ENCODE measurements at regions of chr17 and their contacts with region 1.

Region 1: DNA sequence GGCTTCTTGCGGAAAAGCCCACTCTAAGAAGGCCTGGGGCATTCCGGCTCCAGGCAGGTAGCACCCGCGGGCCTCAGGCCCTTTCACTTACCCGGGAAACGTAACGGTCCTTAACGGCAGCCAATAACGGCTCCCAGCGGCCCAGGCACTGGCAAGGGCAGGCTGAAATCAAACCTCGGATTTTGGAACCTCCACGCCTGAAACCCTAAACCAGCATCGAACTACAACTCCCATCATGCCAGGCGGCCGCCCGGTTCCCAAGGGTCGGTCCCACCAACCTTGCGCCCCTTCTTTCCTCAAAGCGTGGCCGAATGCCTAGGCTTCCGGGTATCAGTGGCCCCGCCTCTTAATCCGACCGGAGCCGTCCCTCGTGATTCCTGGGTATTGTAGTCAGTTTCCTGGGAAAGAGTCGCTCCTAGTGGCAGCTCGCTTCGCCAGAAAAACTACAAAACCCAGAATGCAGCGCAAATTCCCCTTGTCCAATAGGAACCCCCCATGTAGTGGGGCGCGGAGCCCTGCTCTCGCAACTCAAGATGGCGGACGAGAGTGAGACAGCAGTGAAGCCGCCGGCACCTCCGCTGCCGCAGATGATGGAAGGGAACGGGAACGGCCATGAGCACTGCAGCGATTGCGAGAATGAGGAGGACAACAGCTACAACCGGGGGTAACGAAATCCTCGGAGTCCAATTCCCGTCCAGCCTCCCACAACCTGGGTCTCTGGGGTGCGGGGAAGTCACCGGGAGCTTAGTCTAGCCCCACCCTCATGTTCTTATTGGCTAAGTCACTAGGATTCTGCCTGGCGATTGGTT is at the start of gene NMT1:
- DNase-seq: peak; percentile 100
- ATAC-seq: peak; percentile 87
- H3K4me3 ChIP-seq: peak within 1 kb of the TSS; percentile 62 to 98 (median 96)
- H3K4me3 Mint-ChIP-seq: peak within 1 kb of the TSS; percentile 99
- H3K27ac ChIP-seq: peak within 1 kb of the TSS; percentile 75 to 89
- H3K27ac Mint-ChIP-seq: peak within 1 kb of the TSS; percentile 100
- H3K4me1 ChIP-seq: peaks cover 29 to 42% of the 10 kb centered on the region in 2 donors
- H3K4me1 Mint-ChIP-seq: peaks cover 40% of the 10 kb centered on the region
- H3K27me3 ChIP-seq: no peaks in the 10 kb centered on the region
- H3K27me3 Mint-ChIP-seq: no peaks in the 10 kb centered on the region
- CTCF ChIP-seq: no peak
- total RNA-seq, gene NMT1: 123 and 134 TPM in 2 replicates

Region 2: DNA sequence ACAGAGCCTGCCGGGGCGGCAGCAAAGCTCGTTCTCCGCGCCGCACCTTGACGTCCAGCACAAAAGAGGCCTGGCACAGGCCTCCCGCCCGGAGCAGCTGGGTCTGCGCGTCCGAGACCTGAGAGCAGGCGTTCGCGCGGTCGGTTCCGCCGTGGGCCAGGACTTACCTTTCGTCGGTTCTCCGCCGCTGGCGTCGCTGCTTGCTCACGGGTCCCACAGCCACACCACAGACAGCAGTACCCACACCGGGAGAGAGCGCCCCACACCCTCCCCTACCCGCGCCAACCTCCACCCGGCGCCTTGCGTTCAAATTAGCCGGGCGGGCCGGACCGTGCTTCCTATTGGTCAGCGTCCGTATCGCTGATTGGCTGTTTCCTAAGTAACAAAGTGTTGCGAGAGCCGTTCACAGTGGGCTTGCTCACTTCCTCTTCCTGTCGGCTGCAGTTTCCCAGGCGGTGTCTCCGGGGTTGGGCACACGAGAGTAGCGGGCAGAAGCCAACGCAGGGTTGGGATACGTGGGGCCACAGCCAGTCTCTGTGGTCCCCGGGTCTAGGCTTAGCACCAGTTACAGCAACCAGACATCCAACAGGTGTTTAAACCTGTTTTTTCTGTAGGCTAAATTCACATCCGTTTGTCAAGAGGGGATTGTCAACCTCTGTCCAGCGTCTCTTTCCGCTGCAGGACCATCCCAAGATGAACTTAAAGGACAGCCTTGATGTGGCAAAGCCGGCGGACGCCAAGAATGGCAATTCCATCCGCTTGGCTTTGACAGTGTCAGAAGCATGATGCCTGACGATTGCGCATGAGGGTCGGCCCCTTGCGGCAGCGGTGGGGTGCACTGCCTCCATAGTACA is 113.3 kb before region 1 on chr17 and contains the start of gene KIF18B:
- CTCF ChIA-PET with region 1: no interaction called
- POLR2A ChIA-PET with region 1: no interaction called
- intact Hi-C with region 1: loop called (anchors 1 kb)
- DNase-seq: peak; percentile 91
- ATAC-seq: peak; percentile 98
- H3K4me3 ChIP-seq: peak within 1 kb of the TSS; percentile 62 to 79 (median 67)
- H3K4me3 Mint-ChIP-seq: peak within 1 kb of the TSS; percentile 99
- H3K27ac ChIP-seq: peak within 1 kb of the TSS; percentile 56 to 64
- H3K27ac Mint-ChIP-seq: peak within 1 kb of the TSS; percentile 95
- H3K4me1 ChIP-seq: peaks cover 7 to 15% of the 10 kb centered on the region in 2 donors
- H3K4me1 Mint-ChIP-seq: peaks cover 8% of the 10 kb centered on the region
- H3K27me3 ChIP-seq: peaks cover 0 to 4% (median 4%) of the 10 kb centered on the region in 4 experiments
- H3K27me3 Mint-ChIP-seq: peaks cover 6% of the 10 kb centered on the region
- CTCF ChIP-seq: no peak
- total RNA-seq, gene KIF18B: 0.44 TPM in 1 of 2 replicates, not detected in the other